B cell (primary cell): ENCODE measurements at regions of chr2 and their contacts with region 1.

Region 1: GRCh38 chr2:48205137-48205798 is 299.0 kb upstream of the FBXO11 start:
- DNase-seq: peak; percentile 67
- ATAC-seq: peak; percentile 89
- H3K4me3 ChIP-seq: peak overlapping the region in 1 of 5 experiments; percentile 17
- H3K4me3 Mint-ChIP-seq: peak overlapping the region; percentile 52
- H3K27ac ChIP-seq: peak overlapping the region in 1 of 2 donors; percentile 47
- H3K27ac Mint-ChIP-seq: peak overlapping the region; percentile 62
- H3K4me1 ChIP-seq: peaks cover 11 to 14% of the 10 kb centered on the region in 2 donors
- H3K4me1 Mint-ChIP-seq: peaks cover 22% of the 10 kb centered on the region
- H3K27me3 ChIP-seq: no peaks in the 10 kb centered on the region
- H3K27me3 Mint-ChIP-seq: no peaks in the 10 kb centered on the region
- CTCF ChIP-seq: peak; percentile 40

Region 2: GRCh38 chr2:48144777-48145176 is 60.5 kb before region 1 on chr2:
- CTCF ChIA-PET with region 1: no interaction called
- POLR2A ChIA-PET with region 1: interaction called, 13 read pairs
- intact Hi-C with region 1: no loop called
- DNase-seq: no peak
- ATAC-seq: no peak
- H3K4me3 ChIP-seq: no peak overlapping the region
- H3K4me3 Mint-ChIP-seq: no peak overlapping the region
- H3K27ac ChIP-seq: no peak overlapping the region
- H3K27ac Mint-ChIP-seq: no peak overlapping the region
- H3K4me1 ChIP-seq: no peaks in the 10 kb centered on the region
- H3K4me1 Mint-ChIP-seq: peaks cover 4% of the 10 kb centered on the region
- H3K27me3 ChIP-seq: no peaks in the 10 kb centered on the region
- H3K27me3 Mint-ChIP-seq: peaks cover 4% of the 10 kb centered on the region
- CTCF ChIP-seq: no peak

Region 3: DNA sequence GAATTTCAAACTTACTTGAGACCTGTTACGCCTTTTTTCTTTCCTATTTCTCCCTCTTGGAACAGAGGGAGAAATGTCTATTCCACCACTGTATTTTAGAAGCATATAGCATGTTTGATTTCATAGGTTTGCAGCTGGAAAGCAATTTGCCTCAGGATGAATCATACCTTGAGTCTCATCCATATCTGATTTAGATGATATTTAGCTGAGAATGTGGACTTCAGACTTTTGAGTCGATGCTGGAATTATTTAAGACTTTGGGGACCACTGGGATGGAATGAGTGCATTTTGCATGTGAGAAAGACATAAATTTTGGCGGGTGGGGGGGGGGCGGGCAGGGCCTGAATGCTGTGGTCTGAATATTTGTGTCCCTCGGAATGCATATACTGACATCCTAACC is 41.9 kb after region 1 on chr2:
- CTCF ChIA-PET with region 1: no interaction called
- POLR2A ChIA-PET with region 1: no interaction called
- intact Hi-C with region 1: no loop called
- DNase-seq: no peak
- ATAC-seq: no peak
- H3K4me3 ChIP-seq: no peak overlapping the region
- H3K4me3 Mint-ChIP-seq: no peak overlapping the region
- H3K27ac ChIP-seq: no peak overlapping the region
- H3K27ac Mint-ChIP-seq: no peak overlapping the region
- H3K4me1 ChIP-seq: no peaks in the 10 kb centered on the region
- H3K4me1 Mint-ChIP-seq: peaks cover 4% of the 10 kb centered on the region
- H3K27me3 ChIP-seq: no peaks in the 10 kb centered on the region
- H3K27me3 Mint-ChIP-seq: no peaks in the 10 kb centered on the region
- CTCF ChIP-seq: no peak

Region 4: GRCh38 chr2:48420512-48421197 is 215.4 kb after region 1 on chr2:
- CTCF ChIA-PET with region 1: no interaction called
- POLR2A ChIA-PET with region 1: no interaction called
- intact Hi-C with region 1: loop called (anchors 10 kb)
- DNase-seq: peak; percentile 89
- ATAC-seq: peak; percentile 93
- H3K4me3 ChIP-seq: no peak overlapping the region
- H3K4me3 Mint-ChIP-seq: peak overlapping the region; percentile 58
- H3K27ac ChIP-seq: no peak overlapping the region
- H3K27ac Mint-ChIP-seq: no peak overlapping the region
- H3K4me1 ChIP-seq: peaks cover 15 to 16% of the 10 kb centered on the region in 2 donors
- H3K4me1 Mint-ChIP-seq: peaks cover 14% of the 10 kb centered on the region
- H3K27me3 ChIP-seq: no peaks in the 10 kb centered on the region
- H3K27me3 Mint-ChIP-seq: no peaks in the 10 kb centered on the region
- CTCF ChIP-seq: peak; percentile 96